ENCODE measurements at regions of chr17 and their contacts with region 1.

Region 1: GRCh38 chr17:2157675-2158395 is 102.9 kb downstream of the HIC1 start:
- DNase-seq: peak; percentile 84
- H3K4me3 ChIP-seq: no peak overlapping the region
- H3K27ac ChIP-seq: no peak overlapping the region
- H3K4me1 ChIP-seq: peaks cover 17% of the 10 kb centered on the region
- H3K27me3 ChIP-seq: no peaks in the 10 kb centered on the region
- CTCF ChIP-seq: no peak

Region 2: DNA sequence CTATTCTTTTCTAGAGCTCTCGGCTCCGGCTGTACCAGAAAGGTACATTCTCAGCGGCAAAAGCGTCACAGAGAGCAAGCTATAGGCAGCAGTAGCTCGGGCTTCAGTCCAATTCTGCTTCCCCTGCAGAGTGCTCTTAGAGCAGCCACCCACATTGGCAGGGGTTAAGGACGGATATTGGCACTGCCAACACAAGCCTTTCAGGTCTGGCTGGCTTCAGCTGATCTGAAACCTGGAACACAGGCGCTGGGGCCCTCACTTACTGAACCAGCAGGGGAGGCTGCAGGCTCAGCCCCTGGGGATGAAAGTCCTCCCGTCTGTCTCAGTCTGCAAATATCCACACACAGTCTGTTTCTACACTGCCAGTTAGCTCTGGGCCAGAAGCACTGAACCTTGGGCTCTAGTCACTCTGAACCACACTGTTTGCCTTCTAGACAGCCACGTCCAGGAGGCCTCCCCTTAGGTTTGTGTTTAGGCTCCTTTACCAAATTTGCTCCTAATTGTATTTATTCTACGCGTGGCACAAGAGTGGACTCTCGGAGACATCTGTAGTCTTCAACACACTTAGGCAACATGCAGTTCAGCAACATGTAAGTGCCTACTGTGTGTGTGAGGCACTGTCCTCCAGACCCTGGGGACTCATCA is 62.8 kb before region 1 on chr17:
- CTCF ChIA-PET with region 1: no interaction called
- dilution Hi-C with region 1: no loop called
- in situ Hi-C with region 1: no loop called
- intact Hi-C with region 1: loop called (anchors 10 kb)
- DNase-seq: no peak
- H3K4me3 ChIP-seq: no peak overlapping the region
- H3K27ac ChIP-seq: no peak overlapping the region
- H3K4me1 ChIP-seq: peaks cover 14% of the 10 kb centered on the region
- H3K27me3 ChIP-seq: no peaks in the 10 kb centered on the region
- CTCF ChIP-seq: peak; percentile 38 to 71